Naive thymus-derived CD4-positive, alpha-beta T cell (primary cell): ENCODE measurements at regions of chr6 and their contacts with region 1.

Region 1: DNA sequence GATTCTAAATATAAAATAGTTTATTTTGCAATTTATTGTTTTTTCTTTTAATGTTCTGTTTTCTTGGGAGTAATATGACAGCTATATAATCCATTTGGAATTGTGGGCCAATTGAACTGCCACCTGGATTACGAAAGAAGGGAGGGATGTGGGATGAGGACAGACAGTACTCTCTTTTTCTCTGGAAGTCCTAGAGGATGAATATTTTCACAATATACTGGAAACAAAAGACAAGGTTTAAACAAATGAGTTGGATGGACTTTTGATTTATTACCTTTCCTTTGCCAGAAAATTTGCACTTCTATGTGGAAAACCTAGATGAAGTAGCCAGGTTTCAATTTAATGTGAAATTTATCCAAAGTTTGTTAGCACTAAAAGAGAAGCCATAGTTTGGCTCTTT is 325.5 kb upstream of the IMPG1 start:
- DNase-seq: no peak
- ATAC-seq: no peak
- H3K4me3 ChIP-seq: no peak overlapping the region
- H3K4me3 Mint-ChIP-seq: no peak overlapping the region
- H3K27ac ChIP-seq: no peak overlapping the region
- H3K27ac Mint-ChIP-seq: no peak overlapping the region
- H3K4me1 ChIP-seq: no peaks in the 10 kb centered on the region
- H3K4me1 Mint-ChIP-seq: no peaks in the 10 kb centered on the region
- H3K27me3 ChIP-seq: no peaks in the 10 kb centered on the region
- H3K27me3 Mint-ChIP-seq: no peaks in the 10 kb centered on the region

Region 2: GRCh38 chr6:76381612-76382011 is 16.4 kb before region 1 on chr6:
- CTCF ChIA-PET with region 1: interaction called, 3 read pairs
- POLR2A ChIA-PET with region 1: no interaction called
- intact Hi-C with region 1: loop called in 1 of 2 experiments (anchors 1 kb)
- DNase-seq: no peak
- ATAC-seq: no peak
- H3K4me3 ChIP-seq: no peak overlapping the region
- H3K4me3 Mint-ChIP-seq: no peak overlapping the region
- H3K27ac ChIP-seq: no peak overlapping the region
- H3K27ac Mint-ChIP-seq: no peak overlapping the region
- H3K4me1 ChIP-seq: no peaks in the 10 kb centered on the region
- H3K4me1 Mint-ChIP-seq: no peaks in the 10 kb centered on the region
- H3K27me3 ChIP-seq: no peaks in the 10 kb centered on the region
- H3K27me3 Mint-ChIP-seq: no peaks in the 10 kb centered on the region